ENCODE measurements at regions of chr6 and their contacts with region 1.

Region 1: GRCh38 chr6:132530293-132530974 is 7.6 kb upstream of the TAAR9 start:
- DNase-seq: peak; percentile 28
- H3K4me3 ChIP-seq: peak overlapping the region in 1 of 2 experiments; percentile 54; a peak in 1 of 4 replicates
- H3K27ac ChIP-seq: no peak overlapping the region
- H3K4me1 ChIP-seq: no peaks in the 10 kb centered on the region
- H3K27me3 ChIP-seq: peaks cover 22% of the 10 kb centered on the region; the same call in 1 of the 2 replicates
- CTCF ChIP-seq: peak; percentile 88
- EP300 ChIP-seq: no peak
- RAD21 ChIP-seq: peak; percentile 76

Region 2: GRCh38 chr6:132512638-132513632 is 17.5 kb before region 1 on chr6 and contains the start of gene STX7:
- CTCF ChIA-PET with region 1: interaction called, 13 read pairs
- POLR2A ChIA-PET with region 1: no interaction called
- DNase-seq: peak; percentile 93
- H3K4me3 ChIP-seq: peak within 1 kb of the TSS; percentile 72 to 76
- H3K27ac ChIP-seq: peak within 1 kb of the TSS; percentile 19 to 22; a peak in 2 of 4 replicates
- H3K4me1 ChIP-seq: peaks cover 4 to 8% of the 10 kb centered on the region in 2 experiments; a peak in 3 of 4 replicates
- H3K27me3 ChIP-seq: peaks cover 28% of the 10 kb centered on the region; the same call in 1 of the 2 replicates
- CTCF ChIP-seq: no peak
- EP300 ChIP-seq: no peak
- RAD21 ChIP-seq: no peak
- polyA plus RNA-seq, gene STX7: 12.8 and 16.0 TPM in 2 replicates

Region 3: GRCh38 chr6:132544826-132545225 is 14.4 kb after region 1 on chr6:
- CTCF ChIA-PET with region 1: interaction called, 33 read pairs
- POLR2A ChIA-PET with region 1: no interaction called
- DNase-seq: no peak
- H3K4me3 ChIP-seq: no peak overlapping the region
- H3K27ac ChIP-seq: no peak overlapping the region
- H3K4me1 ChIP-seq: no peaks in the 10 kb centered on the region
- H3K27me3 ChIP-seq: peaks cover 29% of the 10 kb centered on the region
- CTCF ChIP-seq: no peak
- EP300 ChIP-seq: no peak
- RAD21 ChIP-seq: no peak

Region 4: DNA sequence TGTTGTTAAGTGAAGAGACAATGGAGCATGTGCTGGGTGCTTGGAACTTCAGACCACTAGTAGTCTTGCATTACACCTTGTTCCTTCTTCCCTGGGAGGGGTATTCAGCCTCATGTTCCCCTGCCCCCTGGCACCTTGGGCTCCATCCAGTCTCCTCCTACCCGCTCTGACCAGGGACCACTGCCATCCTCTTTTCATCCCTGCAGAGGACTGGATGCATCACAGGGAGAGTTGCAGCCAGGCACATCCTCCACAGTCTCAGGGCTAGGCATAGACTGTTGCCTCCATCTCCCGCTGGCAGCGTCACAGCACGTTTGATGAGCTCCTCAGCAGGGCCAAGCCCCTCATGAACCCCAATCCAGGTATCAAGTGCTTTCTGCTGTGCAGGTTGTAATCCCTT is 20.8 kb after region 1 on chr6:
- CTCF ChIA-PET with region 1: interaction called, 11 read pairs
- POLR2A ChIA-PET with region 1: no interaction called
- DNase-seq: no peak
- H3K4me3 ChIP-seq: no peak overlapping the region
- H3K27ac ChIP-seq: no peak overlapping the region
- H3K4me1 ChIP-seq: no peaks in the 10 kb centered on the region
- H3K27me3 ChIP-seq: peaks cover 18% of the 10 kb centered on the region
- CTCF ChIP-seq: no peak
- EP300 ChIP-seq: no peak
- RAD21 ChIP-seq: no peak

Region 5: DNA sequence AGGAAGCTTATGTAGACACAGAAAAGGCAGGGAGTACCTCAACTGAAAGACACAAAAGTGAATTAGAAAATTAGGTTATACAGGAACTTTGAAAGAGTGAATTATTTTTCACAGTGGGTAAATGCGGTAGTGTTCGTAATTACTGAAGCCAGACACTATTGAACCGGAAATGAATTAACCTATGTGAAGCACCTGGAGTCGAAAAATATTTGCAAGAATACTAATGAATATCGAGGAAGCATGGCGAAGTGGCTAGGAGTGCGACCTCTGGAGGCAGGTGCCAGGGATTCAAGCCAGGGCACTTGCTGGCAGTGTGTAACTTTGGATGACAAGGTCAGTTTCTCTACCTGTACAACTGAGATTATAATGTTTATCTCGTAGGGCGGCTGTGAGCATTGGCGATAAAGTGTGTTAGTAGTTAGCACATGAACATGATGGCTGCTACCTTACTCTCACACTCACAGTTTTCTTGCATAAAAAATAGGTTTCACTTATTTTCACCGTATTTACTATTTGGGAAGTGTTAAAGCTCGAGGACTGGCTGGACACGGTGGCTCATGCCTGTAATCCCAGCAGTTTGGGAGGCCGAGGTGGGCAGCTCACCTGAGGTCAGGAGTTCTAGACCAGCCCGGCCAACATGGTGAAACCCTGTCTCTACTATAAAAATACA is 268.6 kb after region 1 on chr6:
- CTCF ChIA-PET with region 1: interaction called, 19 read pairs
- POLR2A ChIA-PET with region 1: no interaction called
- DNase-seq: peak; percentile 61
- H3K4me3 ChIP-seq: peak overlapping the region; percentile 50 to 68; a peak in 2 of 4 replicates
- H3K27ac ChIP-seq: no peak overlapping the region
- H3K4me1 ChIP-seq: no peaks in the 10 kb centered on the region; a peak in 1 of 4 replicates
- H3K27me3 ChIP-seq: peaks cover 21% of the 10 kb centered on the region; the same call in 1 of the 2 replicates
- CTCF ChIP-seq: peak; percentile 87
- EP300 ChIP-seq: no peak
- RAD21 ChIP-seq: peak; percentile 55

Measured in SK-N-SH (cell line).